ENCODE measurements at regions of chr12 and their contacts with region 1.

Region 1: GRCh38 chr12:85866986-85867776 is 6.9 kb upstream of the NTS start:
- DNase-seq: peak; percentile 51
- H3K4me3 ChIP-seq: peak overlapping the region in 1 of 2 experiments; percentile 8; a peak in 1 of 4 replicates
- H3K27ac ChIP-seq: no peak overlapping the region
- H3K4me1 ChIP-seq: no peaks in the 10 kb centered on the region
- H3K27me3 ChIP-seq: no peaks in the 10 kb centered on the region
- CTCF ChIP-seq: peak; percentile 83
- EP300 ChIP-seq: no peak
- RAD21 ChIP-seq: peak; percentile 85

Region 2: GRCh38 chr12:85468356-85469157 is 398.6 kb before region 1 on chr12:
- CTCF ChIA-PET with region 1: interaction called, 64 read pairs
- POLR2A ChIA-PET with region 1: no interaction called
- DNase-seq: peak; percentile 47
- H3K4me3 ChIP-seq: peak overlapping the region; percentile 42 to 51; a peak in 3 of 4 replicates
- H3K27ac ChIP-seq: no peak overlapping the region
- H3K4me1 ChIP-seq: peaks cover 0 to 9% of the 10 kb centered on the region in 2 experiments; a peak in 1 of 4 replicates
- H3K27me3 ChIP-seq: no peaks in the 10 kb centered on the region
- CTCF ChIP-seq: peak; percentile 91
- EP300 ChIP-seq: no peak
- RAD21 ChIP-seq: peak; percentile 85

Region 3: DNA sequence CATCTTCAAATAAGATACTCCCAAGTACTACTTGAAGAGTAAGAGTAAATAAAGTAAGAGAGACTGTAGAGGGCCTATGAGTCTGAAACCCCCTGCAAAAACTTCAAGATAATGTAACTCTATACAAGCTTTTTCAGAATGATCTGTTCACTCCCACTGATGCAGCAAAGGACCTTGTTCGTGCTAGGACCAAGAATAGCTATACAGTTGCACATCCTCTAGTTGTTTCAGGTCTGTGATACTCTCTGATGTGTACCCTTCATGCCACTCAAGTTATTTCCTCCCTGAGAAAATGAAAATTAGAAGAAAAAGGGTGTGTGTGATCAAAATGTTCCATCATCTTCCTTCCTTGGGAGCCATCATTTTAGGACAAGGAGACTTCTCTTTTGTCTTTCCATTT is 382.8 kb before region 1 on chr12:
- CTCF ChIA-PET with region 1: interaction called, 11 read pairs
- POLR2A ChIA-PET with region 1: no interaction called
- DNase-seq: no peak
- H3K4me3 ChIP-seq: no peak overlapping the region
- H3K27ac ChIP-seq: no peak overlapping the region
- H3K4me1 ChIP-seq: no peaks in the 10 kb centered on the region
- H3K27me3 ChIP-seq: no peaks in the 10 kb centered on the region
- CTCF ChIP-seq: no peak
- EP300 ChIP-seq: no peak
- RAD21 ChIP-seq: no peak

Region 4: GRCh38 chr12:85568395-85569103 is 298.6 kb before region 1 on chr12:
- CTCF ChIA-PET with region 1: interaction called, 17 read pairs
- POLR2A ChIA-PET with region 1: no interaction called
- DNase-seq: no peak
- H3K4me3 ChIP-seq: no peak overlapping the region
- H3K27ac ChIP-seq: no peak overlapping the region
- H3K4me1 ChIP-seq: no peaks in the 10 kb centered on the region; a peak in 1 of 4 replicates
- H3K27me3 ChIP-seq: no peaks in the 10 kb centered on the region
- CTCF ChIP-seq: no peak
- EP300 ChIP-seq: no peak
- RAD21 ChIP-seq: no peak

Region 5: GRCh38 chr12:85580562-85581168 is 286.5 kb before region 1 on chr12:
- CTCF ChIA-PET with region 1: interaction called, 80 read pairs
- POLR2A ChIA-PET with region 1: no interaction called
- DNase-seq: no peak
- H3K4me3 ChIP-seq: no peak overlapping the region
- H3K27ac ChIP-seq: no peak overlapping the region
- H3K4me1 ChIP-seq: no peaks in the 10 kb centered on the region
- H3K27me3 ChIP-seq: no peaks in the 10 kb centered on the region
- CTCF ChIP-seq: no peak
- EP300 ChIP-seq: 0 out of 4 replicates have a peak, but pooled peaks of 1 of the 2 experiments have one; percentile 33
- RAD21 ChIP-seq: no peak

Region 6: GRCh38 chr12:85836197-85837090 is 30.7 kb before region 1 on chr12 and contains the start of gene RASSF9:
- CTCF ChIA-PET with region 1: interaction called, 15 read pairs
- POLR2A ChIA-PET with region 1: no interaction called
- DNase-seq: no peak
- H3K4me3 ChIP-seq: peak within 1 kb of the TSS; percentile 22 to 27; a peak in 3 of 4 replicates
- H3K27ac ChIP-seq: peak within 1 kb of the TSS; percentile 43 to 51; a peak in 3 of 4 replicates
- H3K4me1 ChIP-seq: peaks cover 0 to 10% of the 10 kb centered on the region in 2 experiments; a peak in 2 of 4 replicates
- H3K27me3 ChIP-seq: no peaks in the 10 kb centered on the region
- CTCF ChIP-seq: no peak
- EP300 ChIP-seq: no peak
- RAD21 ChIP-seq: no peak
- polyA plus RNA-seq, gene RASSF9: 0.21 and 0.32 TPM in 2 replicates

Region 7: GRCh38 chr12:85855305-85855704 is 11.9 kb before region 1 on chr12:
- CTCF ChIA-PET with region 1: interaction called, 62 read pairs
- POLR2A ChIA-PET with region 1: no interaction called
- DNase-seq: no peak
- H3K4me3 ChIP-seq: no peak overlapping the region
- H3K27ac ChIP-seq: no peak overlapping the region
- H3K4me1 ChIP-seq: no peaks in the 10 kb centered on the region
- H3K27me3 ChIP-seq: no peaks in the 10 kb centered on the region
- CTCF ChIP-seq: no peak
- EP300 ChIP-seq: no peak
- RAD21 ChIP-seq: no peak

Region 8: GRCh38 chr12:86006727-86007126 is 139.5 kb after region 1 on chr12:
- CTCF ChIA-PET with region 1: no interaction called
- POLR2A ChIA-PET with region 1: no interaction called
- DNase-seq: no peak
- H3K4me3 ChIP-seq: no peak overlapping the region
- H3K27ac ChIP-seq: no peak overlapping the region
- H3K4me1 ChIP-seq: no peaks in the 10 kb centered on the region
- H3K27me3 ChIP-seq: no peaks in the 10 kb centered on the region
- CTCF ChIP-seq: no peak
- EP300 ChIP-seq: no peak
- RAD21 ChIP-seq: no peak

Measured in SK-N-SH (cell line).